Activated naive CD4-positive, alpha-beta T cell treated with anti-CD3 and anti-CD28 coated beads for 36 hours (primary cell): ENCODE measurements at regions of chr3 and their contacts with region 1.

Region 1: DNA sequence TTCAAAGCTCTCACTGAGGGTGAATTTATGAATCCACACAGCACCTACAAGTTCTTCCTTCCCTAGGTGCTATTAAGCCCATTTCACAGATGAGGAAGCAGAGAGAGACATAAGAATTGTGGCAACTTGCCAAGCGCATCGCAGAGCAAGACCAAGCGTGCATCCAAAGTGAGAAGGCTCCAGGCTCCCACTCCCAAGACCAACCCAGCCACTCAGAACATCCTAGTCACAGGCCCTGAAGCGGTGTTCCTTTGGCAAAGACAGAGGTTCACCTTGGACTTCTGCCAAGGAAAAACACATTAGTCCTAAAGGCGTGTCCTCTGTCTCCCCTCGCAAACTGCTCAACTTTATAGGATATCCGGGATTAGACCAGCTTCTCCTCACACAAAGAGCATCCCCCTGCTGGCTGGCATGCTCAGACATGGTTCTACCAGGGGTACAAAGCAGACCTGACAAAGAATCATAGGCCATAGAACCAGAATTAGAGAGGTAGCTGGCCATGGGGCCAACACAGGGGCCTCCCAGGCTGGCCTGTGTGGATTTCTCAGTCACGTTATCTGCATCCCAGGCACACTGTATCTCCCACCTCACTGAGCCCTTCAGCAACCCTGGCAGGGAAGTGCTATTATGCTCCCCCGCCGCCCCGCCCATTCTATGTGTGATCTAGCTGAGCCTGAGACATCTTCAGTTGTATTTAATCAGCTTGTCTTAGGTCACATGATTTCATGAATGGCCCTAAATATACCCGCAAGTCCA is 160.2 kb downstream of the FOXP1 start:
- DNase-seq: no peak
- H3K4me3 Mint-ChIP-seq: no peak overlapping the region
- H3K27ac Mint-ChIP-seq: peak overlapping the region; percentile 30
- H3K4me1 Mint-ChIP-seq: peaks cover 84% of the 10 kb centered on the region
- H3K27me3 Mint-ChIP-seq: no peaks in the 10 kb centered on the region

Region 2: GRCh38 chr3:71341721-71342120 is 81.6 kb before region 1 on chr3:
- CTCF ChIA-PET with region 1: no interaction called
- intact Hi-C with region 1: no loop called
- DNase-seq: no peak
- H3K4me3 Mint-ChIP-seq: no peak overlapping the region
- H3K27ac Mint-ChIP-seq: no peak overlapping the region
- H3K4me1 Mint-ChIP-seq: peaks cover 51% of the 10 kb centered on the region
- H3K27me3 Mint-ChIP-seq: no peaks in the 10 kb centered on the region

Region 3: DNA sequence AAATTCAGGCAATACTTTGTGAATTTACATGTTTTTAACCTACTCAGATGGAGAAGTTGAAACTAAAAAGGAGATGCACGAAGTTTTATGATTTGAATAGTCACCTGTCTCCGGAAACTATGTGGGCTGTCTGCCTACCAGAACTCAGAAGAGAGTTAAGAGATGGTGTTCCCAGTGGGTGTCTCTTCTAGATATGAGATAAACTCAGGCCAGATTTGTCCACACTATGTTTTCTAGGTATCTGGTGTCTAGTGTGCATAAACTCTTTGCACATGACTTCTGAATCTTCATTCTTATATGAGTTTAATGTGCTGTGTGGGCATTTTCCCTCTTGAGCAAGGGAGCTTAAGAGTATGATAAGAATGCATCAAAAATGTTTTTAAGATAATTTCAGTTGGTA is 62.6 kb before region 1 on chr3:
- CTCF ChIA-PET with region 1: no interaction called
- intact Hi-C with region 1: loop called (anchors 1 kb)
- DNase-seq: peak; percentile 43
- H3K4me3 Mint-ChIP-seq: peak overlapping the region; percentile 48
- H3K27ac Mint-ChIP-seq: peak overlapping the region; percentile 70
- H3K4me1 Mint-ChIP-seq: peaks cover 82% of the 10 kb centered on the region
- H3K27me3 Mint-ChIP-seq: no peaks in the 10 kb centered on the region

Region 4: DNA sequence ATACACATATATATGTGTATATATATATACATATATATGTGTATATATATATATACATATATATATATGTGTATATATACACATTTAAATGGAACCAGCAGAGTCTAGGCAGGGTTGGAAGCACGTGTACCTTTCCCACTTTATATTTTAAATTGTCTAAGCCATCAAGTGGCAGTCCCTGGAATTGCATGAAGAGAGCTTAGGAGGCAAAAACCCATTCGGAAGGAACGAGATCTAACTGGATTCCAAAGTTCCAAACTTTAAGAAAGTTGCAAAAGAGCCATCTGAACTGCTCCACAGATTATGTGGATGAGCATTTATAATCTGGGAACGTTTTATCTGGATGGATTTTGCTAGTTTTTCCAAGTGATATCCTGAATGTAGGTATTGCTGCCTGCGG is 26.3 kb before region 1 on chr3:
- CTCF ChIA-PET with region 1: interaction called, 16 read pairs
- intact Hi-C with region 1: loop called (anchors 1 kb)
- DNase-seq: peak; percentile 35
- H3K4me3 Mint-ChIP-seq: peak overlapping the region; percentile 5
- H3K27ac Mint-ChIP-seq: no peak overlapping the region
- H3K4me1 Mint-ChIP-seq: peaks cover 81% of the 10 kb centered on the region
- H3K27me3 Mint-ChIP-seq: no peaks in the 10 kb centered on the region

Region 5: GRCh38 chr3:71456156-71456555 is 32.8 kb after region 1 on chr3:
- CTCF ChIA-PET with region 1: interaction called, 3 read pairs
- intact Hi-C with region 1: loop called (anchors 1 kb)
- DNase-seq: no peak
- H3K4me3 Mint-ChIP-seq: peak overlapping the region; percentile 77
- H3K27ac Mint-ChIP-seq: peak overlapping the region; percentile 93
- H3K4me1 Mint-ChIP-seq: peaks cover 88% of the 10 kb centered on the region
- H3K27me3 Mint-ChIP-seq: no peaks in the 10 kb centered on the region

Region 6: GRCh38 chr3:71478568-71478967 is 55.2 kb after region 1 on chr3:
- CTCF ChIA-PET with region 1: no interaction called
- intact Hi-C with region 1: loop called (anchors 1 kb)
- DNase-seq: peak; percentile 94
- H3K4me3 Mint-ChIP-seq: peak overlapping the region; percentile 38
- H3K27ac Mint-ChIP-seq: peak overlapping the region; percentile 96
- H3K4me1 Mint-ChIP-seq: peaks cover 85% of the 10 kb centered on the region
- H3K27me3 Mint-ChIP-seq: no peaks in the 10 kb centered on the region

Region 7: DNA sequence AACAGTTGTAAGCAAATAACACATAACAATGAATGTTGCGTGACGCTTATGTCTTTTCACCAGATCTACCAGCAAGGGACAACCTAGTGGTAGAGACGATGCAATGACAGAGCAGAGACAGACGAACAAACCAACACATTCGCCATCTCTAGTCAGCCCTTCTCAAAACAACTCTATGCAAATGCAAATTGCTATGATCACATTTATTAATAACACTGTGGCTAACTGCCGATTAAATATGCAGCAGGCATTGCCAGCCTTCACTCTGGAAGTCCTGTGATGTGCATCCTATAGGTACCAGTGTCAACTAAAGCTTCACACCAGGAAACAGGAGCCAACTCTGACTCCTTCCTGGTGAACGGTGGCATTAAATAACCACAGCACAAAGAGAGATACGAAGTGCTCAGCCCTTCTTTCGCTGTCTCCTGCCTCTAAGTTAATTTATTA is 66.0 kb after region 1 on chr3:
- CTCF ChIA-PET with region 1: interaction called, 3 read pairs
- intact Hi-C with region 1: loop called (anchors 1 kb)
- DNase-seq: peak; percentile 35
- H3K4me3 Mint-ChIP-seq: peak overlapping the region; percentile 67
- H3K27ac Mint-ChIP-seq: peak overlapping the region; percentile 88
- H3K4me1 Mint-ChIP-seq: peaks cover 88% of the 10 kb centered on the region
- H3K27me3 Mint-ChIP-seq: no peaks in the 10 kb centered on the region